Activated CD4-positive, alpha-beta memory T cell treated with anti-CD3 and anti-CD28 coated beads for 36 hours (primary cell): ENCODE measurements at regions of chr17 and their contacts with region 1.

Region 1: GRCh38 chr17:39754161-39754951 is 16.6 kb downstream of the GRB7 start:
- DNase-seq: peak; percentile 98
- H3K4me3 Mint-ChIP-seq: peak overlapping the region; percentile 78
- H3K27ac Mint-ChIP-seq: peak overlapping the region; percentile 91
- H3K4me1 Mint-ChIP-seq: peaks cover 67% of the 10 kb centered on the region
- H3K27me3 Mint-ChIP-seq: no peaks in the 10 kb centered on the region

Region 2: GRCh38 chr17:39687811-39688518 is 66.4 kb before region 1 on chr17 and contains the start of gene PGAP3:
- CTCF ChIA-PET with region 1: no interaction called
- POLR2A ChIA-PET with region 1: no interaction called
- intact Hi-C with region 1: loop called (anchors 5 kb)
- DNase-seq: peak; percentile 91
- H3K4me3 Mint-ChIP-seq: peak within 1 kb of the TSS; percentile 92
- H3K27ac Mint-ChIP-seq: peak within 1 kb of the TSS; percentile 84
- H3K4me1 Mint-ChIP-seq: peaks cover 18% of the 10 kb centered on the region
- H3K27me3 Mint-ChIP-seq: no peaks in the 10 kb centered on the region
- total RNA-seq, gene PGAP3: 8.3 to 8.6 TPM

Region 3: DNA sequence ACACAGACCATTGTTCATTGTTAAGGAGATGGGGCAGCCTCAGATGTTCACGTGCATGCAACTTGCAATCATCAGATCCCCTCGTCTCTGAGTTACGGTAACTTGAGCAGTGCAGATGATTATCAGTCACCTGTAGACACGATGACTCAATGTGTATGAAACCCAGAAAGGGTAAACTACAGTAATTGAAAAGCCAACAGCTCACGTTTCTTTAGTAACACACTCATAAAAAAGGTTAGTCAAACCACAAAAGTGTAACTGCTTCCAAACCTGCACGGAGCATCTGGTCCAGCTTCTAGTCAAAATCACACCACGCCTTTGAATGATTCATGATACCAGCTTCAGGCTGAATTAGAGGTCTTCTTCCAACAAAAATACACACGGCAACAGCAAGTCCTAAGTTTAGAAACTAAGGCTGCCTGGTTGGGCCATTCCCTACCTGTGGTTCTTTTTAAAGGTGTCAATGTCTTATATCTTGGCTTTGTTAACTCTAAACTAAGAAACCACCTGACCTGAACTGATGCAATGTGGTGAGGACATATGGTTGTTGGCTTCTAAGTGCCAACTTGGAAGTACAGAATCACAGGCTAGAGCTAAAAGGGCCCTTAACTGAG is 15.7 kb after region 1 on chr17:
- CTCF ChIA-PET with region 1: interaction called, 16 read pairs
- POLR2A ChIA-PET with region 1: interaction called, 42 read pairs
- intact Hi-C with region 1: loop called (anchors 1 kb)
- DNase-seq: peak; percentile 82
- H3K4me3 Mint-ChIP-seq: no peak overlapping the region
- H3K27ac Mint-ChIP-seq: peak overlapping the region; percentile 85
- H3K4me1 Mint-ChIP-seq: peaks cover 96% of the 10 kb centered on the region
- H3K27me3 Mint-ChIP-seq: no peaks in the 10 kb centered on the region

Region 4: DNA sequence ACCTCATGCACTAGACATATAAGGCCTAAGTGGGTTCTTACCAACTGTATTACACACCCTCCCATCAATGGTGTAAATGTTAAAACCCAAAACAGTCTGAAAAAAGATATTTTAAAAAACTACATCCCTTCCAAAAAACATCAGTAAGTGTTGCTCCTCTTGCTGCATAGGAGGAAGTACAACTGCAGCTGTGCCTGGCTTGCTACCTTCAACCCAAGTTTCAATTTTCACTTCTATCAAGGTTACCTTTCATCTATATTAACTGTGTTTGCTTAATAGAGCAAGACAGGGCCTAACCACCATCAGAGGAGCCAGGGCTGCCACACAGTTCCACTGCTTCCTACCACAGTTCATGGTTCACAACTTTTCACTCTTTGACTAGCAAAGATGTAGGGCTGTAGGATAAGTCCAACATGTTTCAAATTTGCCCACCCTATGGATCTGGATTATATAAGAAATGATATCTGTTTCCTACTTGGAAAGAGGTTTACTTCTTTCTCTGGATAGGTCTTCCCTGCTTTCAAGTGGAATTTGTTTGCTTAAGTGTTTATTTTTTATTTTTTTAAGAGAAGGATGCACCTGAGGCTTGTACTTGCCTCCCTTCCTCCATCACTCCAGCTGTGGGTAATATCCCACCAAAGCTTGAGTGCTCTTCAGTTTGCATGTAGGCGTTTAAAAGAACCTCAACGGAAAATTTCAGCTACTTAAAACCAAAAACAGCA is 40.1 kb after region 1 on chr17:
- CTCF ChIA-PET with region 1: interaction called, 6 read pairs
- POLR2A ChIA-PET with region 1: interaction called, 6 read pairs
- intact Hi-C with region 1: loop called (anchors 2 kb)
- DNase-seq: peak; percentile 41
- H3K4me3 Mint-ChIP-seq: peak overlapping the region; percentile 2
- H3K27ac Mint-ChIP-seq: peak overlapping the region; percentile 83
- H3K4me1 Mint-ChIP-seq: peaks cover 76% of the 10 kb centered on the region
- H3K27me3 Mint-ChIP-seq: no peaks in the 10 kb centered on the region

Region 5: GRCh38 chr17:39980351-39981206 is 226.2 kb after region 1 on chr17 and contains the start of gene PSMD3:
- CTCF ChIA-PET with region 1: interaction called, 7 read pairs
- POLR2A ChIA-PET with region 1: interaction called, 5 read pairs
- intact Hi-C with region 1: loop called (anchors 1 kb)
- DNase-seq: peak; percentile 99
- H3K4me3 Mint-ChIP-seq: peak within 1 kb of the TSS; percentile 95
- H3K27ac Mint-ChIP-seq: peak within 1 kb of the TSS; percentile 88
- H3K4me1 Mint-ChIP-seq: peaks cover 30% of the 10 kb centered on the region
- H3K27me3 Mint-ChIP-seq: peaks cover 6% of the 10 kb centered on the region
- total RNA-seq, gene PSMD3: 120 to 124 TPM